ENCODE measurements at regions of chr1 and their contacts with region 1.

Region 1: GRCh38 chr1:33228935-33229487 is 27.3 kb upstream of the ZNF362 start:
- DNase-seq: peak in 1 of 2 donors; percentile 80
- ATAC-seq: peak; percentile 73 to 94 (median 90)
- H3K4me3 ChIP-seq: no peak overlapping the region
- H3K27ac ChIP-seq: peak overlapping the region in 5 of 10 donors; percentile 16 to 69 (median 24)
- H3K4me1 ChIP-seq: peaks cover 0 to 33% (median 6%) of the 10 kb centered on the region in 9 donors
- H3K27me3 ChIP-seq: no peaks in the 10 kb centered on the region
- CTCF ChIP-seq: no peak

Region 2: DNA sequence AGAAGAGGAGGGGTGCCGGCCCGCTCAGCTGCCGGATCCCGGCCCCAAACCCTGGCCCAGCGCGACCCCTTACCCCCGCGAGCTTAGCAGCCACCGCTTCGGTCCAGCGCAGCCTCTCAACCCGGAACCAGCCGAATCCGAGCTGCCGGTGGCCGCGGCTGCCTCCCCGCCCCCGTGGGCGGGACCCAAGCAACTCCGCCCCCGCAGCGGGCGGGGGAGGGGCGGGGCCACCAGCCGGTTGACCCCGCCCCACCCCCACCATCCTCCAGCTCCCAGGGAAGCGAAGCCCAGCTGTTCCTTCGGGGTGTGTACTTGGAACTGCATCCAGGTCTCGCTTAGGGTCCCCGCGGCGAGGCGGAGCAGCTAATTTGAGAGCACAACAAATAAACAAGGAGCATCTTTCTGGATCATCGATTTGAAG is 47.1 kb before region 1 on chr1 and contains the start of gene TRIM62:
- intact Hi-C with region 1: loop called in 1 of 10 experiments (anchors 5 kb)
- DNase-seq: peak; percentile 90 to 91
- ATAC-seq: peak; percentile 88 to 95 (median 90)
- H3K4me3 ChIP-seq: peak within 1 kb of the TSS; percentile 75 to 95 (median 90)
- H3K27ac ChIP-seq: peak within 1 kb of the TSS in 9 of 10 donors; percentile 65 to 86 (median 79)
- H3K4me1 ChIP-seq: peaks cover 3 to 26% (median 16%) of the 10 kb centered on the region in 9 donors
- H3K27me3 ChIP-seq: peaks cover 0 to 9% (median 0%) of the 10 kb centered on the region in 7 donors
- CTCF ChIP-seq: no peak
- total RNA-seq, gene TRIM62: 2.0 to 3.7 (median 2.8) TPM

Region 3: DNA sequence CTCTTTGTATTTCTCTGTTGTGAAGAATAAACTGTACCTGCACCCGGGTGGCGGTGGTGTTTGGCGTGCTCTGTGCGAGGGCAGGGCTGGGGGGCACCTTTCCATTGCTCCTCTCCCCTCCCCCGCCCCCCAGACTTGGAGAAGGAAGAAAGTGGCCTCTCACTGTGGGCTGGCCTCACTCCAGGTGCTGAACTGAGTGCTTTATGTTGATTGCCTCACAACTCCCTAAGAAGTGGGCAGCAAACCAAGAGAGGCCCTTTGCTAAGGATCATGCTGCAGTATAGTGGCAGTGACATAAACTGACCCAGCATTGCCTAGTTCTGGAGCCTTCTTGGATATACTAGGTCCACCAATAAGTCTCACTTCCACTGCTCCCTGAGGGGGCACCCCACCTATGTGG is 71.7 kb after region 1 on chr1:
- intact Hi-C with region 1: loop called in 3 of 10 experiments (anchors 5 to 10 kb)
- DNase-seq: peak in 1 of 2 donors; percentile 54
- ATAC-seq: peak in 2 of 8 donors; percentile 41 to 49
- H3K4me3 ChIP-seq: no peak overlapping the region
- H3K27ac ChIP-seq: no peak overlapping the region
- H3K4me1 ChIP-seq: peaks cover 0 to 35% (median 21%) of the 10 kb centered on the region in 9 donors
- H3K27me3 ChIP-seq: no peaks in the 10 kb centered on the region
- CTCF ChIP-seq: no peak

Region 4: GRCh38 chr1:33443080-33443704 is 214.2 kb after region 1 on chr1:
- intact Hi-C with region 1: loop called in 1 of 10 experiments (anchors 10 kb)
- DNase-seq: no peak
- ATAC-seq: peak in 5 of 8 donors; percentile 23 to 44 (median 33)
- H3K4me3 ChIP-seq: no peak overlapping the region
- H3K27ac ChIP-seq: peak overlapping the region in 4 of 10 donors; percentile 9 to 51 (median 29)
- H3K4me1 ChIP-seq: peaks cover 4 to 31% (median 15%) of the 10 kb centered on the region in 9 donors
- H3K27me3 ChIP-seq: no peaks in the 10 kb centered on the region
- CTCF ChIP-seq: no peak

Region 5: GRCh38 chr1:33460947-33461629 is 232.1 kb after region 1 on chr1:
- intact Hi-C with region 1: loop called in 2 of 10 experiments (anchors 10 kb)
- DNase-seq: peak; percentile 44 to 77
- ATAC-seq: peak; percentile 61 to 87 (median 75)
- H3K4me3 ChIP-seq: no peak overlapping the region
- H3K27ac ChIP-seq: peak overlapping the region; percentile 59 to 93 (median 84)
- H3K4me1 ChIP-seq: peaks cover 2 to 74% (median 35%) of the 10 kb centered on the region in 9 donors
- H3K27me3 ChIP-seq: no peaks in the 10 kb centered on the region
- CTCF ChIP-seq: no peak

Region 6: GRCh38 chr1:33616773-33617172 is 387.8 kb after region 1 on chr1:
- intact Hi-C with region 1: loop called in 2 of 10 experiments (anchors 5 to 10 kb)
- DNase-seq: no peak
- ATAC-seq: peak in 1 of 8 donors; percentile 29
- H3K4me3 ChIP-seq: no peak overlapping the region
- H3K27ac ChIP-seq: no peak overlapping the region
- H3K4me1 ChIP-seq: peaks cover 0 to 6% (median 0%) of the 10 kb centered on the region in 9 donors
- H3K27me3 ChIP-seq: peaks cover 0 to 12% (median 4%) of the 10 kb centered on the region in 7 donors
- CTCF ChIP-seq: no peak